ENCODE measurements at regions of chr10 and their contacts with region 1.

Region 1: DNA sequence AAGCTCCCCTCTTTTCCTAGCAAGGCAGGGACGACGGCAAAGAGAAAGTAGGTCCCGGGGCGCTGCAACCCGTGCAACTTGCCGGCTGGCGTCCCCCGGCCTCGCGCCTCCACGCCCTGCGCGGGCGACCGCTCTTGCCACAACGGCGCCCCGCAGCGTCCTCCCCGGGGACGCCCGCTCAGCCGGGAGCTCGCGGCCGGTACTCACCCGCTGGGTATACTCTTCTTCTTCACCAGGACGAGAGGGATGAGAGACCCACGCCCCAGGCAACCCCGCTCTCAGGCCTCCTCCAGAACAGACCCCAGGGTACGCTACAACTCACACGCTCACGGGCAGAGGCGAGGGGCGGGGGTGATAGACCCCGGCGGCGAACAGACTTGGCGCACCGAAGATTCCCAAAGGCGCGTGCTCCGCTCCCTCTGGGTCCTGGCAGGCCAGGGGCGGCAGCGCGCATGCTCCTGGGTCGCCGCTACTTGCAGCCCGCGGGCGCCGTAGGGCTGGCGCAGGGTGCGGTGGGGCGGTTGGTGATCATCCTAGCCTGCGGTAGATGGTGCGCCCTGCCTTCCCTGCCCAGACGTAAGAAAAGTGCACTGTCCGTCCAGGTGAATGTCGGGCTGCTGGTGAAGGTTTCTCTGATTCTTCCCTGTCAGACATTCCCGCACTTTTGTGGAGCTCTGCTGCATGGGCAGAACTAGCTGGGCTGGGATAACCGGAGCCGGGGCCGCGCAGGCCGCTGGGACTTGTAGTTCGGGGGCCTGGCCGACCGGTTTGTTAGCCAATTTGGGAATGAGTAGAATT is at the start of gene CC2D2B:
- DNase-seq: peak; percentile 80
- ATAC-seq: peak; percentile 92
- H3K4me3 ChIP-seq: peak within 1 kb of the TSS; percentile 71 to 95 (median 92)
- H3K4me3 Mint-ChIP-seq: peak within 1 kb of the TSS; percentile 95
- H3K27ac ChIP-seq: peak within 1 kb of the TSS; percentile 65 to 80
- H3K27ac Mint-ChIP-seq: peak within 1 kb of the TSS; percentile 92
- H3K4me1 ChIP-seq: peaks cover 16 to 20% of the 10 kb centered on the region in 2 donors
- H3K4me1 Mint-ChIP-seq: peaks cover 13% of the 10 kb centered on the region
- H3K27me3 ChIP-seq: no peaks in the 10 kb centered on the region
- H3K27me3 Mint-ChIP-seq: no peaks in the 10 kb centered on the region
- CTCF ChIP-seq: peak; percentile 8
- total RNA-seq, gene CC2D2B: 1.2 and 2.1 TPM in 2 replicates

Region 2: GRCh38 chr10:95896071-95896846 is 11.4 kb before region 1 on chr10:
- CTCF ChIA-PET with region 1: interaction called, 4 read pairs
- POLR2A ChIA-PET with region 1: interaction called, 4 read pairs
- intact Hi-C with region 1: loop called (anchors 1 kb)
- DNase-seq: peak; percentile 71
- ATAC-seq: peak; percentile 67
- H3K4me3 ChIP-seq: no peak overlapping the region
- H3K4me3 Mint-ChIP-seq: peak overlapping the region; percentile 12
- H3K27ac ChIP-seq: peak overlapping the region; percentile 11 to 75
- H3K27ac Mint-ChIP-seq: peak overlapping the region; percentile 43
- H3K4me1 ChIP-seq: peaks cover 12 to 15% of the 10 kb centered on the region in 2 donors
- H3K4me1 Mint-ChIP-seq: peaks cover 19% of the 10 kb centered on the region
- H3K27me3 ChIP-seq: no peaks in the 10 kb centered on the region
- H3K27me3 Mint-ChIP-seq: no peaks in the 10 kb centered on the region
- CTCF ChIP-seq: no peak

Region 3: DNA sequence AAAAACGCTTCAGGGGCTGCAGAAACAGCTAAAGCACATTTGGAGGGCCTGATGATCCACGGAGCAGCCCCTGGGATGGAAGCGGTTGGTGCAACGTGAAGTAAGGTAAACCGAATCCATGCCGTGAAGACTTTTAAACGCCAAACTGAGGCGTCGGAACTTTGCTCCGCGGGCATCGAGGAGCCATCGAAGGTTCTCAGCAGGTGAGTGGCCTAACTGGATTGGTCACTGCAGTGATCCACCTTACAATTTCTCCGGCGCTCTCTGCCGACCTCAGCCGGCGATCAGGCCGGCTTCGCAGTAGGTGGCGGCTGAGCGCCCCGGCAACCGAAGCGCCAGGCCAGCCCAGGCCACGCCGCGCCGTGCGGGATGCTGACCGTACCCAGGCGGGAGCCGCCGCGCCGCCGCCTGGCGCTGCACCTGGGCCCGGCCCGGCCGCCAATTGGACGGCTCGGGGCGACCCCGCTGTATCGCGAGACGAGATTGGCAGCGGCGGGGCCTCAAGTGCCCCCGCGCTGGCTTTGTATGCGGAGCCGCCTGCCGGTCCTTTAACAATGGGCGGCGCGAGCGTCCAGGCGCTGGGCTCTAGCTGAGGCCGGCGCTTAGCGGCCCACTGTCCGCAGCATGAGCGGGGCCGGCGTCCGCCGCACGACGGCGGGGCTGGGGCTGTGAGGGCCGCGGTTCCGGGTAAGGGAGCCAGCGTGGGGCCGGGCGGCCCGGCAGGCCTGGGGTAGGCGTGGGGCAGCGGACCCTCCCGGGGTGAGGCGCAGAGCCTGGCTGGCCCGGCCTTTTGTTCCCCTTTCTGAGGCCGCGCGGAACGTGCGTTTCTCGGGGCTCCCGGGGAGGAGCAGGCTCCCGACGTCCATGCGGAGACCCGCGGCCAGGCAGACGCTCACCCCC is 135.6 kb after region 1 on chr10 and contains the start of gene CCNJ:
- CTCF ChIA-PET with region 1: no interaction called
- POLR2A ChIA-PET with region 1: no interaction called
- intact Hi-C with region 1: loop called (anchors 5 kb)
- DNase-seq: peak; percentile 91
- ATAC-seq: peak; percentile 85
- H3K4me3 ChIP-seq: peak within 1 kb of the TSS; percentile 56 to 83 (median 73)
- H3K4me3 Mint-ChIP-seq: peak within 1 kb of the TSS; percentile 96
- H3K27ac ChIP-seq: peak within 1 kb of the TSS; percentile 54 to 84
- H3K27ac Mint-ChIP-seq: peak within 1 kb of the TSS; percentile 88
- H3K4me1 ChIP-seq: peaks cover 11 to 14% of the 10 kb centered on the region in 2 donors
- H3K4me1 Mint-ChIP-seq: peaks cover 37% of the 10 kb centered on the region
- H3K27me3 ChIP-seq: peaks cover 0 to 5% (median 0%) of the 10 kb centered on the region in 4 experiments
- H3K27me3 Mint-ChIP-seq: no peaks in the 10 kb centered on the region
- CTCF ChIP-seq: peak; percentile 3
- total RNA-seq, gene CCNJ: 8.9 and 9.1 TPM in 2 replicates

Region 4: GRCh38 chr10:96089670-96090462 is 182.2 kb after region 1 on chr10:
- CTCF ChIA-PET with region 1: interaction called, 3 read pairs
- POLR2A ChIA-PET with region 1: no interaction called
- intact Hi-C with region 1: loop called (anchors 1 kb)
- DNase-seq: peak; percentile 98
- ATAC-seq: peak; percentile 88
- H3K4me3 ChIP-seq: peak overlapping the region; percentile 67 to 97 (median 96)
- H3K4me3 Mint-ChIP-seq: peak overlapping the region; percentile 98
- H3K27ac ChIP-seq: peak overlapping the region; percentile 89 to 96
- H3K27ac Mint-ChIP-seq: peak overlapping the region; percentile 99
- H3K4me1 ChIP-seq: peaks cover 6 to 9% of the 10 kb centered on the region in 2 donors
- H3K4me1 Mint-ChIP-seq: peaks cover 10% of the 10 kb centered on the region
- H3K27me3 ChIP-seq: peaks cover 0 to 31% (median 20%) of the 10 kb centered on the region in 4 experiments
- H3K27me3 Mint-ChIP-seq: peaks cover 33% of the 10 kb centered on the region
- CTCF ChIP-seq: no peak